HCT116 (cell line): ENCODE measurements at regions of chr2 and their contacts with region 1.

Region 1: DNA sequence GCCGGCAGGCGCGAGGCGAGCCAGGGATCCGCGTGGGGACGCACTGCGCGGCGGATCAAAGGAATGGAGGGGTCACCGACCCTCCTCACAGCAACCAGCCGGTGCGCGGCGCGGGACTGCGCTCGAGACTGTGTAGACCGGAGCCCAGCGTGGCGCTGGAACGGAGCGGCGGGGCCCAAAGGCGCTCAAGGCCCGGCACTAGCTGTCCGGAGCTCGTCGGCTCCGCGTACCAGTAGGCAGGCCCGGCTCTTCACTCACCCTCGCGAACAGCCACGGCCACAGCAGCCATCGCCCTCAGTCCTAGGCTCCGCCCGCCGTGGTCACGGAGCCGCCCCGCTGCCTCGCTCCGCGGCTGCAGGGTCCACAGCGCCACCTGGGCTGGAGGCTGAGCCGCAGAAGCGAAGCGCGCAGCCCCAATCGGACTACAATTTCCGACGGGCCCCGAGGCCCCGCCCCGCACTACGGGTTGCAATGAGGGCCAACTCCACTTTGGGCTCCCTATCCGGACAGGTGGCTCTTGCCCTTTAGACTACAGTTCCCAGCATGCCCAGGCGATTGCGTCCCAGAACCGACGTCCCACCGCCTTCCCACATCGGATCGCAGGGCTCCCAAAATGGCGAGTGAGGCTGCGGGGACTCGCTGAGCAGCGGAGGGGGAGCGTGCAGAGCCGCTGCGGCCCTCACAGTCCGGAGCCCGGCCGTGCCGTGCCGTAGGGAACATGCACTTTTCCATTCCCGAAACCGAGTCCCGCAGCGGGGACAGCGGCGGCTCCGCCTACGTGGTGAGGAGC is at the starts of genes EIF2B4 and SNX17:
- DNase-seq: peak; percentile 98
- ATAC-seq: peak; percentile 94
- H3K4me3 ChIP-seq: peak within 1 kb of the TSS; percentile 64 to 96
- H3K27ac ChIP-seq: peak within 1 kb of the TSS; percentile 85
- H3K4me1 ChIP-seq: peaks cover 10 to 29% of the 10 kb centered on the region in 2 experiments; a peak in 3 of 4 replicates
- H3K27me3 ChIP-seq: no peaks in the 10 kb centered on the region
- CTCF ChIP-seq: peak in 2 of 3 experiments; percentile 69 to 79; a peak in 4 of 6 replicates
- POLR2A ChIP-seq: peak; percentile 77
- RAD21 ChIP-seq: no peak
- total RNA-seq, gene EIF2B4: 43.8 TPM
- total RNA-seq, gene SNX17: 90.5 TPM

Region 2: DNA sequence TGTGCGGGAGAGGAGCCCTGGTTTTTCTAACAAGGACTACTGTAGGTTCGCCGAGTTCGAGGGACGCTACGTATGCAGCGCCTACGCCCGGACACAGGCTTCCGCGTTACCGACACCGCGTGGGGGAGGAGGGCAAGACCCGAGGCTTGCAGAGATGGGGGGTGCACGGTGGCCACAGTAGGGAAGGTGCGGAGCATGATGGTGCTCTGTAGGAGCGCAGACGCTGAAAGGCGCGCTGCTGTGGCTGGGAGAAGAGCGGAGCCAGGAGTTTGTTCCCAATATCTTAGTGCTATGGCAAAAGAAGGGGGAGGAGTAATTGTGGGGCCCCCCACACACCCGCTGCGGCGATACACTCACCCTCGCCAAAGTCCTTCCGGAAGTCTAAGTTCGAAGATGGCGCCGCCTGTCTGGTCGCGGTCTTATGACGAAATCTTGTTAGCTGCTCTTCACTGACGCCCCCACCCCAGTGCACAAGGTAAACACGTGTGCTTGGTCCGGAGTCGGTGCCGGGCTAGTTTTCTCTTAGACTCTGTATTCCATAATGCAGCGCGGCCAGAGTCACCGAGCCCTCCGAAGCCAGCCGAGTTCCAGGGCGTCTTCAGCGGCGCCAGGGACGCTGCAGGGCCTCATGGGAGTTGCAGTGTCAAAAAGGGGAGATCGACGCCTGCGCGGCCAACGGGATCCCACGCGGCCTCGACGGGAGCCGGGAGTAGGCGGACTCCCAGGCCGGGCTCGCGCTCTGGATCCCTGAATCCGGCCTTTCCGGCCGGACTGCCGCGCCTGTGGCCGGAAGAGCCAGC is 13.6 kb before region 1 on chr2 and contains the start of gene GTF3C2:
- CTCF ChIA-PET with region 1: interaction called, 7 read pairs
- POLR2A ChIA-PET with region 1: interaction called, 14 read pairs
- RAD21 ChIA-PET with region 1: no interaction called
- intact Hi-C with region 1: loop called (anchors 2 kb)
- DNase-seq: peak; percentile 98
- ATAC-seq: peak; percentile 85
- H3K4me3 ChIP-seq: peak within 1 kb of the TSS; percentile 99 to 100
- H3K27ac ChIP-seq: peak within 1 kb of the TSS; percentile 98
- H3K4me1 ChIP-seq: peaks cover 12 to 28% of the 10 kb centered on the region in 2 experiments
- H3K27me3 ChIP-seq: no peaks in the 10 kb centered on the region
- CTCF ChIP-seq: no peak
- POLR2A ChIP-seq: no peak
- RAD21 ChIP-seq: no peak
- total RNA-seq, gene GTF3C2: 88.2 TPM

Region 3: DNA sequence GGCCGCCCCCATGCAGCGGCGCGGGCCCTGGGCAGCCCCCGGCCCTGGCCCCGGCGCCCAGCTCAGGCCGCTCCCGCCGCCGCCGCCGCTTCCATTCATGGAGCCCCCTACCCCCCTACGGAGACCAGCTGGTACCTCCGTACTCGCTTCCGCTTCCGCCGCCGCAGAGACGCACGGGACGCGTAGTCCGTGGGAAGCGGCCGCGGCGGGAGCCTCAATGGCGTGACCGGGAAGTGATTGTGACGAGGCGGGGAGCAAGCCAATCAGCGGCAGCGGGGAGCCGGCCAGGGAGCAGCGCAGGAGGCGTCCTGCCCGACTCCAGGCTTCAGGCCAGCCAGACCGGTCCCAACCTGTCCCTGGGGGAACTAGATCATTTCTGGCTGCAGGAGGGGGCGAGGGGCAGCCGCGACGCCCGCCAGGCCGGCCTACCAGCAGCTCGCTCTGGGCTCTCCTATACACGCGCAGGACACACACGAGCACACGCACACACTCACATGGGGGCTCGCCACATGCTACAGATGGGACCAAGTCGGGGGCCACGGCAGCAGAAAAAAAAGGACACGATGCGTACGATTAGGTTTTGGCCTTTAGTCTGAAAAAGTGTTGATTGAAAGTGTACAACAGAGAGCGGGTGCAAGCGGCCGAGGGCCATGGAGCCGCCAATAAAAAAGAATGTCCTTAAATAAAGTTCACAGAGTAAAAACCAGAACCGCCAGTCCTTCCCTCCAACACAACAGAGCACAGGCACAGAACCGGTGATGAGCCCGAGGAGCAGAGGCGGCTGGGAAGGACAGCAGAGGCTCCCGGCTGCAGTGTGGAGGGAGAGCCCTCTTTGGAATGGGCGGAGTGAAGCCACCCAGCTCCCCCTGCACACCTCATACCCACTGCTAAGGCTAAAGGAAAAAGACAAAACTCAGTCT is 10.7 kb after region 1 on chr2 and contains the start of gene ZNF513:
- CTCF ChIA-PET with region 1: interaction called, 6 read pairs
- POLR2A ChIA-PET with region 1: interaction called, 6 read pairs
- RAD21 ChIA-PET with region 1: interaction called in 1 of 2 experiments, 3 read pairs
- intact Hi-C with region 1: loop called (anchors 1 kb)
- DNase-seq: peak; percentile 76
- ATAC-seq: peak; percentile 89
- H3K4me3 ChIP-seq: peak within 1 kb of the TSS; percentile 72 to 80
- H3K27ac ChIP-seq: peak within 1 kb of the TSS; percentile 67
- H3K4me1 ChIP-seq: peaks cover 3 to 27% of the 10 kb centered on the region in 2 experiments; a peak in 3 of 4 replicates
- H3K27me3 ChIP-seq: no peaks in the 10 kb centered on the region
- CTCF ChIP-seq: no peak
- POLR2A ChIP-seq: no peak
- RAD21 ChIP-seq: no peak
- total RNA-seq, gene ZNF513: 12.8 TPM